PC-3 (cell line): ENCODE measurements at regions of chr20 and their contacts with region 1.

Region 1: DNA sequence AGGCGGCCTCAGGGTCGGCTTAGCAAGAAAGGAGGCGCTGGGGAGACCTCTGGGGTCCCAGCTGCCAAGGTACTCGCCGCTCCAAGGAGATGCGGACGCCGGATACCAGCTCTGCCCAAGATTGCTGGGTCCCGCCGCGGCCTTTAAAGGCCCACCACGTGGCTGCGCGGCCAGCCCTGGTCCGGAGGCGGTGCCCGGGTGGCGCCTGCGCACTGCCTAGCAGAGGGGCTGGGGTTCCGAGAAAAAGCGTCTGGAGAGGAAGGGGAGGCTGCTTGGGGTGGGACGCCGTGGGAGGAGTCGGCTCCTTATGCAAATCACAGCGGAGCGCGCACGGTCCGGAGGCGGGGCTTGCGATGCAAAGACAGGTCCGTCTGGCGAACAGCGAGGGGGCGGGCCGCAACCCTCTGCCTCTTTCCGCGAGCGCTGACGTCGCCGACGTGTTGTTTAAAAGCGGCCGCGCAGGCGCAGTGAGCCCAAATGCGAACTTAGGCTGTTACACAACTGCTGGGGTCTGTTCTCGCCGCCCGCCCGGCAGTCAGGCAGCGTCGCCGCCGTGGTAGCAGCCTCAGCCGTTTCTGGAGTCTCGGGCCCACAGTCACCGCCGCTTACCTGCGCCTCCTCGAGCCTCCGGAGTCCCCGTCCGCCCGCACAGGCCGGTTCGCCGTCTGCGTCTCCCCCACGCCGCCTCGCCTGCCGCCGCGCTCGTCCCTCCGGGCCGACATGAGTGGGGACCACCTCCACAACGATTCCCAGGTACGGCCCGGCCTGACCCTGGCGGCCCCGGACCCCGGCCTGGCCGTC is at the start of gene TOP1:
- DNase-seq: peak; percentile 99
- ATAC-seq: peak; percentile 95
- H3K4me3 ChIP-seq: peak within 1 kb of the TSS; percentile 75
- H3K27ac ChIP-seq: peak within 1 kb of the TSS; percentile 65
- H3K4me1 ChIP-seq: peaks cover 35% of the 10 kb centered on the region
- H3K27me3 ChIP-seq: no peaks in the 10 kb centered on the region
- CTCF ChIP-seq: no peak
- total RNA-seq, gene TOP1: 29.1 and 56.8 TPM in 2 replicates

Region 2: DNA sequence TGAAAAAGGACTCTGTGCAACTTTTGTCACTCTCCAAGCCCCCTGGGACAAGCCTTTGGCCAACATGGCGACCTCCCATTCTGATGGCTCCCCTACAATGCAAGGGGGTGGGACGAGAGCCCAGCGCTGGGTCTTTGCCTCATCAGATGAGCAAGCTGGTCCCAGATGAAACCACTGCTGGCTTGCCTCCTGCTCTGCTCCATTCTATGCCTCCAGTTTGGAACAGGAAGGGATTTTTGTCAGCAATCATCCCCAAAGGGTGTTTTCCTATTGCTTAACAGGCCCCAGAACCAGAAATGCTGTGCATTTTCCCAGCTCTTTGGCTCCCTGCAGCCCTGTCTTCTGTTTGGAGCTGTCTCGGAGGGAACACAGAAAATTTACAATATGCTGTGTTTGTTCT is 752.2 kb before region 1 on chr20:
- CTCF ChIA-PET with region 1: no interaction called
- POLR2A ChIA-PET with region 1: no interaction called
- intact Hi-C with region 1: no loop called
- DNase-seq: no peak
- ATAC-seq: no peak
- H3K4me3 ChIP-seq: no peak overlapping the region
- H3K27ac ChIP-seq: no peak overlapping the region
- H3K4me1 ChIP-seq: no peaks in the 10 kb centered on the region
- H3K27me3 ChIP-seq: no peaks in the 10 kb centered on the region
- CTCF ChIP-seq: no peak

Region 3: DNA sequence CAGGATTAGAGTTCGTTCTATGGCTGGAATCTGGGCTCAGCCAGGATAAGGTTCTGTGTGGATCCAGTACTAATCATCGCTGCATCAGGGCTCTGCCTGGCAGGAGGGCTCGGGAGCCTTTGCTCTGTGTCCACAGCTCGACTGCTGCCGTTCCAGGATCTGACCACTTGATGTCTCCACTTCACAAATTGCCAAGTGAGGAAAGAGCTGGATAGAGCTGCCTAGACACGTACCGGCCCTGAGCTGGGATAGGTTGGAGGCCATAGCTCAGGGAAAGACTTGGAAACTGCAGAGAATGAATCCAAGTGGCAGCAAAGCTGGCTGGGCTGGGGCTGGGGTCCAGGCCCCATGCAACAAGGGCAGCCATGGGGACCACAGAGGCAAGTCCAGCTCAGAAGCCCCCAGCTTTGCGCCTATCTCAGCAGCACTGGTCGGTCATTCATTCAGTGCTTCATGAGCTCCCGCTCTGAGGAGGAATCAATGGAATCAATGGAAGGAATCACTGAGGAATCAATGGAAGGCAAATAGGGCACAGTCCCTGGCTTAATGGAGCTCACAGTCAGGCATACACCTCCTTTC is 37.9 kb before region 1 on chr20:
- CTCF ChIA-PET with region 1: interaction called, 8 read pairs
- POLR2A ChIA-PET with region 1: interaction called, 3 read pairs
- intact Hi-C with region 1: loop called (anchors 1 kb)
- DNase-seq: peak; percentile 92
- ATAC-seq: peak; percentile 99
- H3K4me3 ChIP-seq: no peak overlapping the region
- H3K27ac ChIP-seq: no peak overlapping the region
- H3K4me1 ChIP-seq: peaks cover 13% of the 10 kb centered on the region
- H3K27me3 ChIP-seq: no peaks in the 10 kb centered on the region
- CTCF ChIP-seq: peak; percentile 91

Region 4: DNA sequence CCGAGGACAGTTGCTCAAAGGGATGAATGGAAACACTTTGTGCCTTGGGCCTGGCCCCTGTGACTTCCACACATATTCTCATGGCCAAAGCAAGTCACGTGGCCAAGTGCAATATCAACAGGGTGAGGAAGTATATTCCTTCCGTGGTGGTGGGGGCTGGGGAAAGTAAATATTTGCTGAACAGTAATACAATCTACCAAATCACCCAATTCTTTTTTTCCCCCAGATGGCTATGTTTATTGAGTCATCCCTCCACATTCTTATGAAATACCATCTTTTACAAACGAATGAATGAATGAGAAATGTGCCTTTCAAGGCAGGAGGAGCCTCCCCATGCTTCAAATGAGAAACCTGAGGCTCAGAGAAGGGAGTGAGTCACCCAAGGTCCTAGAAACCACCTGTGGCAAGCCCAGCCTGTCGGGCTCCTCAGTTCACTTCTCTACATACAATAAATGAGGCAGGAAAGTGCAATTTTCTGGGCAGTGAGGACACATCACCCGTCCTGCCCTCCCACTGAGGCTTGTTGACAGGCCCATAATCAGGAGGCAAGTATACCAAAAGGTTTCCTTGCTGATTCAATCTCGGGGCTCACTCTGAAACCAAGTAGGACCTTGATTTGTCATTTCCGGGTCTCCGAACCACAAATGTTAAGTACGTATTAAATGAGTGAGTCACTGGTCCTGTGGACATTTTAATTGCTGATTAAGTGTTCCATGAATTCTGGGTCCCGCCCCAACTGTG is 25.2 kb before region 1 on chr20:
- CTCF ChIA-PET with region 1: no interaction called
- POLR2A ChIA-PET with region 1: interaction called, 5 read pairs
- intact Hi-C with region 1: loop called (anchors 1 kb)
- DNase-seq: peak; percentile 99
- ATAC-seq: peak; percentile 71
- H3K4me3 ChIP-seq: peak overlapping the region; percentile 49
- H3K27ac ChIP-seq: peak overlapping the region; percentile 99
- H3K4me1 ChIP-seq: peaks cover 50% of the 10 kb centered on the region
- H3K27me3 ChIP-seq: no peaks in the 10 kb centered on the region
- CTCF ChIP-seq: no peak

Region 5: GRCh38 chr20:41072190-41072863 is 43.8 kb after region 1 on chr20:
- CTCF ChIA-PET with region 1: no interaction called
- POLR2A ChIA-PET with region 1: no interaction called
- intact Hi-C with region 1: loop called (anchors 2 kb)
- DNase-seq: peak; percentile 90
- ATAC-seq: peak; percentile 93
- H3K4me3 ChIP-seq: peak overlapping the region; percentile 15; the same call in 1 of the 2 replicates
- H3K27ac ChIP-seq: peak overlapping the region; percentile 82
- H3K4me1 ChIP-seq: peaks cover 40% of the 10 kb centered on the region
- H3K27me3 ChIP-seq: no peaks in the 10 kb centered on the region
- CTCF ChIP-seq: no peak

Region 6: GRCh38 chr20:41085606-41086005 is 57.1 kb after region 1 on chr20:
- CTCF ChIA-PET with region 1: no interaction called
- POLR2A ChIA-PET with region 1: interaction called, 17 read pairs
- intact Hi-C with region 1: no loop called
- DNase-seq: no peak
- ATAC-seq: no peak
- H3K4me3 ChIP-seq: no peak overlapping the region
- H3K27ac ChIP-seq: no peak overlapping the region
- H3K4me1 ChIP-seq: peaks cover 14% of the 10 kb centered on the region
- H3K27me3 ChIP-seq: no peaks in the 10 kb centered on the region
- CTCF ChIP-seq: no peak

Region 7: GRCh38 chr20:41786158-41786557 is 757.6 kb after region 1 on chr20:
- CTCF ChIA-PET with region 1: no interaction called
- POLR2A ChIA-PET with region 1: no interaction called
- intact Hi-C with region 1: no loop called
- DNase-seq: peak; percentile 63
- ATAC-seq: no peak
- H3K4me3 ChIP-seq: no peak overlapping the region
- H3K27ac ChIP-seq: no peak overlapping the region
- H3K4me1 ChIP-seq: no peaks in the 10 kb centered on the region
- H3K27me3 ChIP-seq: no peaks in the 10 kb centered on the region
- CTCF ChIP-seq: no peak